GM10248 (cell line): ENCODE measurements at regions of chr15 and their contacts with region 1.

Region 1: GRCh38 chr15:44308415-44308814 is 19.9 kb downstream of the GOLM2 start:
- DNase-seq: peak; percentile 54
- CTCF ChIP-seq: no peak

Region 2: DNA sequence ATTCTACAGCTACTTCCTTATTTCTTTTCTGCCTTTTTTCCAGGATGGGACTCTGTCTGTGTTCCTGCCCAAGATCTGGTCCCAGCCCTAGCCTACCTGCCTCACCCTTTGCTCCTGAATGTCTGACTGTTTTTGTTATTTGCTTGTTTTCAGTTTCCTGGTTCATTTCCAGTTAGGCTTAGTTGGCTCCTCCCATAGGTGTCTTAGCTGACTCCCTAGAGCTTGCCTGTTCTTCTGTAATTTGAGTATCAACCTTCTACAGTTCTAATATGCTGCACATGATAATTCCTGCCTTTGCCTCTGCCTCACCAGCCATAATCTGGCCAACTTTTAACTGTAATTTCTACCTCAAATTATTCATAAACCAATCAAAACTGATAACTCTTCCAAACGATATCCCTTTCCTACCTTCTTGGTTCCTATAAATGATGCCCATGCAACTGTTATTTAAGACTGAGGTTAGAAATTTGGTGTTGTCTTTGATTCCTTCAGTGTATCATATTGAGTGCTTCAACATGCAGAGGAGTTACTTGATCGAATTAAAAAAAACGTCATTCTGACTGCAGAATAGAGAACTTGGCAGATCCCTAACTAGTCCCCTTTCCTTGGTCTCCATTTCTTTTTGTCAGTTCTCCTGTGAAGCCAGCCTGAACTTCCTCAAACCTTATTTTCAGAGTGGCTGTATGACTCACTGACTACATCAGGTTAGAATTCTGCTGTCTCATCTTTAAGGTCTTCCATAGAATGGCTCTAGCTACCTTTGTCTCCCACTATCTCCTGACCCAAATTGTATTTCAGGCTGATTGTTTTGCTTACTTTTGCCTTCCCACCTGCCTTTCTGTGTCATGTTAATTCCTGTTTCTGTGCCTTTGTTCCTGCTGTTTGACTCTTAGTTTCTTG is 11.5 kb before region 1 on chr15:
- CTCF ChIA-PET with region 1: interaction called, 10 read pairs
- POLR2A ChIA-PET with region 1: no interaction called
- DNase-seq: peak; percentile 23
- CTCF ChIP-seq: no peak

Region 3: DNA sequence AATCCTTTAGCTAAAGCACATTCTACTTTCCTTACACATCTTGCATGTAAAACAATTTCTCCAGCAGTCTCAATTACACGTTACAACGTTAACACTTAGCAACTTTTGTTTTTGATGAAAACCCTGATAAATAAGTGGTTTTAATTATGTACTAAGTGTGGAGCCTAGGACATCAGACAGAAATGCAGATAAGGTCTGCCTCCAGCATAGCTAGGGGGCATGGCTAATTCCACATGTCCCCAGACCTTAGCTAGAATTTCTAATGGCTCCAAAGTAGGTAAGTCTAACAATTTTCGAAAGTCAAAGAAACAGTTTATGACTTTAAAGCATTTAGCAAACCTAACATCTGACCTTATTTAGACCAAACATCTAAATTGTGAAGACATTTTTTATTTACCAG is 570.7 kb after region 1 on chr15:
- CTCF ChIA-PET with region 1: no interaction called
- POLR2A ChIA-PET with region 1: no interaction called
- DNase-seq: no peak
- CTCF ChIP-seq: no peak